ENCODE measurements at regions of chr3 and their contacts with region 1.

Region 1: DNA sequence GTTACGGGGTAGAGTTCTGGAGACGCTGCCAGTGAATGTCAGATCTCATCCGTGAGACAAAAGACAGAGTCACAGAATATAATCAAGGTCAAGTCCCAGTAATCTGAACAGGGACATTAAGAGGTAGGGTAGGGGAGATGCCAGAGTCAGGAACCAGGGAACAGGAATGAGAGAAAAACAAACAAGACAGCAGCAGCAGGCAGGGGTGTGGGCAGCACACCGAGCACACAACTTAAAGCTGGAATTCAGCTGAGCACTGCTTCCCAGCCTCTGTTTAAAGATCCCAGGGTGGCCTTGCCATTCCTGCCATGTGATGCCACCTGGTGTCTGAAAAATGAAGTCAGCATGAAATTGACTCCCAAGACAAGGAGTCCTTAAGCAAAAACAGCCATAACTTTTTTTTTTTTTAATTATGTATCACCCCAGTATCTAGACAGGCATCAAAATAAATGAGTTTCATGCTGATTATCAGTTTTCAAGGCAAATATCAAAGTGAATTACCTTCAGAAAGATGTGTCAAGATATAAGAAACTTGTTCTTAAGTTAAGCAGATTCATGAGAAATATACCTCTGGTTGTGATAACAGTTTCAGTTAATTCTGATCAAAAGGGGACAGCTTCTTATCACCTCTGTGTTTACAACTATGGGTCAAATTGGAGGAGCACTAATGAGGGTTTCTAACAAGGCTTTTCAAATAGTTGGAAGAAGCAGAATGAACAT is 203.7 kb downstream of the SLC9A9 start:
- DNase-seq: peak in 5 of 10 donors; percentile 15 to 89 (median 40)

Region 2: DNA sequence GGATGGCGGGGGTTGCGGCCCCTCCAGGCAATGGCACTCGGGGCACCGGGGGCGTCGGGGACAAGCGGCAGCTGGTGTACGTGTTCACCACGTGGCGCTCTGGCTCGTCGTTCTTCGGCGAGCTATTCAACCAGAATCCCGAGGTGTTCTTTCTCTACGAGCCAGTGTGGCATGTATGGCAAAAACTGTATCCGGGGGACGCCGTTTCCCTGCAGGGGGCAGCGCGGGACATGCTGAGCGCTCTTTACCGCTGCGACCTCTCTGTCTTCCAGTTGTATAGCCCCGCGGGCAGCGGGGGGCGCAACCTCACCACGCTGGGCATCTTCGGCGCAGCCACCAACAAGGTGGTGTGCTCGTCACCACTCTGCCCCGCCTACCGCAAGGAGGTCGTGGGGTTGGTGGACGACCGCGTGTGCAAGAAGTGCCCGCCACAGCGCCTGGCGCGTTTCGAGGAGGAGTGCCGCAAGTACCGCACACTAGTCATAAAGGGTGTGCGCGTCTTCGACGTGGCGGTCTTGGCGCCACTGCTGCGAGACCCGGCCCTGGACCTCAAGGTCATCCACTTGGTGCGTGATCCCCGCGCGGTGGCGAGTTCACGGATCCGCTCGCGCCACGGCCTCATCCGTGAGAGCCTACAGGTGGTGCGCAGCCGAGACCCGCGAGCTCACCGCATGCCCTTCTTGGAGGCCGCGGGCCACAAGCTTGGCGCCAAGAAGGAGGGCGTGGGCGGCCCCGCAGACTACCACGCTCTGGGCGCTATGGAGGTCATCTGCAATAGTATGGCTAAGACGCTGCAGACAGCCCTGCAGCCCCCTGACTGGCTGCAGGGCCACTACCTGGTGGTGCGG is 523.1 kb before region 1 on chr3:
- intact Hi-C with region 1: loop called (anchors 10 kb)
- DNase-seq: peak; percentile 20 to 94 (median 58)

Region 3: DNA sequence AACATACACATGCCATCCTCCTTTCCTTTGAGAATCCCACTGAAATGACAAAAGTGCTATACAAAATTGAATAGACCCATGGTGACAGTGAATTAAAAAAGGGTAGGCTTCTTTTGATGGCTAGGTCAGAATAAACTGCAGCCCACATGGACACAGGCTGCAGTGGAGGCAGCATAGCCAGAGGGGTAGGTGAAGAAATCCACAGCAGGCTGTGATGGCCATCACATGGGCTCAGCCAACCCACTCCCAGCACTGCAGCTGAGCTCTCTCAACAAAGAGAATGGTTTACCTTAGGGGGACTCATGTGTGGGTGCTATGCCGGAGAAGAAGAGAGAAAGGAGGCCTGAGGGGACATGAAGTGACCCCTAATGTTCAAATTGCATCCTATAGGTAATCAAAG is 193.9 kb before region 1 on chr3:
- intact Hi-C with region 1: no loop called
- DNase-seq: no peak

Region 4: DNA sequence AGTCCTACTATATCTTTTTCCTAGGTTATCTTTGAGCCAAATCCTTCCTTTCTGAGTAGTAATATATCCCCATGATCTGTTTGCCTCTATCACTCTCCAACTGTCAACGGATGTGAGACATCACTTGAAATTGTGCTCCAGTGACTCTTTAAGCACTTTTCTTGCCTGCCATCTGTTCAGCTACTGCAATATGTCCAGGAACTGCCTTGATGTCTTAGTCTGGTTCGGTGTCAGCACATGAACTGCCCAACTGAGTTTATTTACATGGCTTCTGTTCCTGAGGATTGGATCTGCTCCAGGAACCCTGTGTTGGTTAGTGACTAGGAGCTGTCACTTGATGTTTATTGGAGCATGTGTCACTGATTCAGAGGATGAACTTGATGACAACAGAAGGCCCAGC is 87.2 kb after region 1 on chr3:
- intact Hi-C with region 1: no loop called
- DNase-seq: no peak

Region 5: GRCh38 chr3:144586382-144586781 is 941.9 kb after region 1 on chr3:
- intact Hi-C with region 1: no loop called
- DNase-seq: no peak